Heart right ventricle (tissue), 16 donors: ENCODE measurements at regions of chr1 and their contacts with region 1.

Region 1: DNA sequence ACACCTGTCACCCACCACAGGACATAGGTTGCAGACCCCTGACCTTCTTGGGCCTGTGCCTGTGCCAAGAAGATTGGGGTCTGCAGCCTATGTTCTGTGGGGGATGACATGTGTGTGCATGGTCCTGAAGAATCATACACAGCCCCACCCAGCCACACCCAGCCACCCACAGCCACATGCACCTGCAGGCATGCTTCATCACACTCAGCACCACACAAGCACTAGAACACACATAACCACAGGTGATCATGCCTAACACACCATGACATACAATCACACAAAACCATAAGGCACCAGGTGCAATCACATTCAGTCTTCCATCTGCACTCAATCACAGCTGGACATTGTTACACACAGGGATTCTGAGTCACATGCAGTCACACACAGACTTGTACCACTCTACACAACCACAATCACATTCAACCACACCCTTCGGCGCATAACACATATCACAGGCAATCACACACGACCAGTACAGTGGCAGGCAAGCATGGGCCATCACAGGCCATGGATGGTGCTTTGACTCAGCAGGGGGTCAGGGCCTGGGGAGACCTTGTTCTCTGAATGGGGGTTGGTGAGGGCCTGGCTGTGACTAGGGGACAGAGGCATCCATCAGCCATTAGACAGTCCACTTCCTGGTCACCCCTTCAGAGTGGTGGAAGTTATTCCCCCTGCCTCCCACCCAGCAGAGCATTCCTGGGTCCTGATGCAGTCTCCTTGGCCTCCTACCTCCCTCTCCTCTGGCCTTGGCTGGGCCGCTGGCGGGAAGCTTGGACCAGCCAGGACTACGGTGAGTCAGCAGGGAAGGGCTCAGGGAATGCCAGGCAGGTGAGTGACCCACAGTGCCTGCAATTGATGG is 44.3 kb upstream of the EPS8L3 start:
- DNase-seq: no peak
- ATAC-seq: peak in 1 of 8 donors; percentile 33
- H3K4me3 ChIP-seq: no peak overlapping the region
- H3K27ac ChIP-seq: no peak overlapping the region
- H3K4me1 ChIP-seq: peaks cover 0 to 42% (median 27%) of the 10 kb centered on the region in 9 donors
- H3K27me3 ChIP-seq: no peaks in the 10 kb centered on the region
- CTCF ChIP-seq: no peak

Region 2: DNA sequence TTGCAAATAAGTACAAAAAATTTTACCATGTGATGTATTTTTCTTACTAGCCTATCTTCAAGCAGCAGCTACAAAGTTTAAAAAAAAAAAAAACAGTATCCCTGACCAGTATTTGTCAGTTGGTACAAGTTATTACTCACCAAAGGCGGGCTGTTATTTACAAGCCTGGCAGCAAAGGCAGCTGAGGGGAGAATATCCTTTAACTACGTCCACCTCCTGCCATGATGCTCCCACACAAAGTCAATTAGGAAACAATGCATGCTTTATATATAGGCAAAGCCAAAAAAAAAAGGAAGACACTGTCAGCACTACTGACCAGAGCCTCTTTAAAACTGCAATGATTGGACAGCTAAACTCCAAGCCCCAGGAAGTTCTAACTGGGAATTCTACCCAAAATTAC is 395.5 kb before region 1 on chr1:
- intact Hi-C with region 1: no loop called
- DNase-seq: no peak
- ATAC-seq: no peak
- H3K4me3 ChIP-seq: no peak overlapping the region
- H3K27ac ChIP-seq: no peak overlapping the region
- H3K4me1 ChIP-seq: peaks cover 0 to 14% (median 0%) of the 10 kb centered on the region in 9 donors
- H3K27me3 ChIP-seq: no peaks in the 10 kb centered on the region
- CTCF ChIP-seq: no peak

Region 3: GRCh38 chr1:109823543-109824348 is 15.7 kb after region 1 on chr1:
- intact Hi-C with region 1: loop called in 1 of 10 experiments (anchors 1 kb)
- DNase-seq: peak in 1 of 2 donors; percentile 60
- ATAC-seq: peak in 7 of 8 donors; percentile 41 to 72 (median 53)
- H3K4me3 ChIP-seq: no peak overlapping the region
- H3K27ac ChIP-seq: peak overlapping the region in 3 of 10 donors; percentile 7 to 79 (median 34)
- H3K4me1 ChIP-seq: peaks cover 14 to 90% (median 52%) of the 10 kb centered on the region in 9 donors
- H3K27me3 ChIP-seq: no peaks in the 10 kb centered on the region
- CTCF ChIP-seq: no peak

Region 4: GRCh38 chr1:109864047-109864822 is 56.2 kb after region 1 on chr1:
- intact Hi-C with region 1: no loop called
- DNase-seq: no peak
- ATAC-seq: peak in 7 of 8 donors; percentile 33 to 68 (median 55)
- H3K4me3 ChIP-seq: no peak overlapping the region
- H3K27ac ChIP-seq: peak overlapping the region in 2 of 10 donors; percentile 27 to 41
- H3K4me1 ChIP-seq: peaks cover 0 to 22% (median 13%) of the 10 kb centered on the region in 9 donors
- H3K27me3 ChIP-seq: no peaks in the 10 kb centered on the region
- CTCF ChIP-seq: no peak